Motor neuron (in vitro differentiated cells): ENCODE measurements at regions of chr14 and their contacts with region 1.

Region 1: DNA sequence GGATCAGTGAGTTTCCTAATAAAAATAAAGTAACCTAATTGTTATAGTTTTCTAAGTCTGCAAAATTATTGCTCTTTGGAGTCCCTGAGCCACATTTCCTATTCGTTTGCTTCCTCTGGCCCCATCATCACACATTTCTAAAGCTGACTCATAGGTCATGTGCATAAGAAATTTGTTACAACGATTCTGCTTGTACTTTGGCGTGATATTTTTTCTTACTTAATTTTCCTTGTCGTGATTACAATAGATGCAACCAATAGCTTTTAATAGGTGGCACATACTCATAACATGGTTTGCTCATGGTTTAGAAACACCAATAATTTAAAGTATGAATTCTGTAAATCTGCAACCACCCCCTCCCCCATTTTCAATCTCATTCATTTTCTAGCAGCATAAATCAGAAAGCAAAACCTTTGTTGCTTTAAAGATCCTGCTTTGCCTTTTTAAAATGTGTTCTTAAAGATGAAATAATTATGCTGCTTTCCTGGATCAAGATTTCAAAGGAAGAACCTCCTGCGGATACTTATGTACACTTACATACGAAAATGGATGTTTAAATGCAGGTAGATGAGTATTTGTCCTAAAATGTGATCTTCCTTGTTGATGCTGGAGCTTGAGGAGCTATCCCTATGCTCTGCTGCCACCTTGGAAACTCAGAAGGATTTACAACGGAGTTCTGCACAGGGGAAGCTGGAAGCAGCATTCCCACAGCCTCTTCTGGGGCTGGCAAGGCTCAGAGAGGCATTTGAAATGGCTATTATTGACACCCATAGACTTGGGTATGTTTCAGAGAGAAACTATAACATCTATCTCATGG is 1.7 kb upstream of the FLRT2 start:
- ATAC-seq: peak; percentile 6 to 52 (median 46)
- H3K4me3 ChIP-seq: peak overlapping the region; percentile 63 to 81 (median 66)
- H3K27ac ChIP-seq: no peak overlapping the region
- H3K4me1 ChIP-seq: peaks cover 0 to 8% of the 10 kb centered on the region in 2 donors

Region 2: DNA sequence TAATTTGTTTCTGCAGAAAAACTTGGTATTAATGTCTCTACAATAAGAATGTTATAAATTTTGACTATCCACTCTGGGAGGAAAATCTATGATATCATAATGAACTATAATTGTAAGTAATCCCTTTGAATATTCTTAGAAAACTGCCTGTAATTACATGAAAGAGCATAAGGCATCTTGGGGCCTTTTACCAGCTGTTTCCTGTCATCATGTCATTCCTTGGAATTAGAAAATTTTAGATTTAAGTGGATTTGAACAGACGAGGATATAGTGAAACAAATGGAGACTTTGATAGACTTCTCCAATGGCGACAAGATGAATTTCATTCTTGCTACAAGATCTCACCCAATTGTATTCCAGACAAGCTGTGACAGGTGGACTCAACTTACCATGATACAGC is 421.8 kb before region 1 on chr14:
- in situ Hi-C with region 1: no loop called
- ATAC-seq: no peak
- H3K4me3 ChIP-seq: no peak overlapping the region
- H3K27ac ChIP-seq: no peak overlapping the region
- H3K4me1 ChIP-seq: no peaks in the 10 kb centered on the region

Region 3: DNA sequence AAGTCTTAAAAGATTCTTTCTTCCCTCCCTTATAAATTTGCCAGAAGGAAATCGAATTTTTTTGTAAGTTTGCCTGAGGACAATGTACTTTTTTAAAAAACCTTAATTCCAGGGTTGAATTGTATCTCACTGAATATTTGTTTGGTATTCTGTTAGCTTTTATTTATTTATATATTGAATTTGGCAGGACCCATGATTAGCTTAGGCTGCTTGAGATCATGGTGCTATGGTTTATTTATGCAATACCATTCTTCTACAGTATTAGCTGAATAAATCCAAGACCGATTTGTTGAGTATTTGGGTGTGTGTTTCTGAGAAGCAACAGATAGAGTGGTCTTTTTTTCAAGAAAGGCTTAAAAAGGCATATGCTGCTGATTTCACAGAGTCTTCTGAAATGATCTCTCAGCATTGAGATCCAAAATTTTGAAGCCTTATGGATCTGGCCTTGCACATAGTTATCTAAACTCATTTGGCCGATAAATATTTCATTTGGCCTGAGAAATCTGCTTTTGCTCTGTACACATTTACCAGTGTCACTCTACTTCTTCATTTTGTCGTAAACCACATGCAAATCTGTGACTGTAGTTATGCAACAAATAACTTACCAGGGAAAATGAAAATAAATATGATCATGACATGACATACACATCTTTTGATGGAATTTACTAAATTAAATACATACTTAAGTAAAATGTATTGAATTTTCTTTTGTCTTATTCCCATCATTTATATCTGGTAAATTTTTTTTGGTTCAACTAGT is 264.2 kb before region 1 on chr14:
- in situ Hi-C with region 1: no loop called
- ATAC-seq: no peak
- H3K4me3 ChIP-seq: no peak overlapping the region
- H3K27ac ChIP-seq: no peak overlapping the region
- H3K4me1 ChIP-seq: no peaks in the 10 kb centered on the region

Region 4: GRCh38 chr14:85415015-85415712 is 113.1 kb before region 1 on chr14:
- in situ Hi-C with region 1: loop called in 1 of 9 experiments (anchors 10 kb)
- ATAC-seq: peak; percentile 87 to 100 (median 99)
- H3K4me3 ChIP-seq: no peak overlapping the region
- H3K27ac ChIP-seq: no peak overlapping the region
- H3K4me1 ChIP-seq: peaks cover 3 to 16% of the 10 kb centered on the region in 2 donors

Region 5: GRCh38 chr14:85444635-85445034 is 83.7 kb before region 1 on chr14:
- in situ Hi-C with region 1: no loop called
- ATAC-seq: no peak
- H3K4me3 ChIP-seq: no peak overlapping the region
- H3K27ac ChIP-seq: no peak overlapping the region
- H3K4me1 ChIP-seq: no peaks in the 10 kb centered on the region

Region 6: GRCh38 chr14:85909581-85909980 is 381.3 kb after region 1 on chr14:
- in situ Hi-C with region 1: no loop called
- ATAC-seq: no peak
- H3K4me3 ChIP-seq: no peak overlapping the region
- H3K27ac ChIP-seq: no peak overlapping the region
- H3K4me1 ChIP-seq: no peaks in the 10 kb centered on the region

Region 7: GRCh38 chr14:86057018-86057667 is 528.9 kb after region 1 on chr14:
- in situ Hi-C with region 1: loop called in 2 of 9 experiments (anchors 25 kb)
- ATAC-seq: peak in 1 of 8 experiments; percentile 30
- H3K4me3 ChIP-seq: no peak overlapping the region
- H3K27ac ChIP-seq: no peak overlapping the region
- H3K4me1 ChIP-seq: no peaks in the 10 kb centered on the region